Activated B cell treated with CpG ODN at 0.5 μM for 24 hours (primary cell): ENCODE measurements at regions of chr11 and their contacts with region 1.

Region 1: DNA sequence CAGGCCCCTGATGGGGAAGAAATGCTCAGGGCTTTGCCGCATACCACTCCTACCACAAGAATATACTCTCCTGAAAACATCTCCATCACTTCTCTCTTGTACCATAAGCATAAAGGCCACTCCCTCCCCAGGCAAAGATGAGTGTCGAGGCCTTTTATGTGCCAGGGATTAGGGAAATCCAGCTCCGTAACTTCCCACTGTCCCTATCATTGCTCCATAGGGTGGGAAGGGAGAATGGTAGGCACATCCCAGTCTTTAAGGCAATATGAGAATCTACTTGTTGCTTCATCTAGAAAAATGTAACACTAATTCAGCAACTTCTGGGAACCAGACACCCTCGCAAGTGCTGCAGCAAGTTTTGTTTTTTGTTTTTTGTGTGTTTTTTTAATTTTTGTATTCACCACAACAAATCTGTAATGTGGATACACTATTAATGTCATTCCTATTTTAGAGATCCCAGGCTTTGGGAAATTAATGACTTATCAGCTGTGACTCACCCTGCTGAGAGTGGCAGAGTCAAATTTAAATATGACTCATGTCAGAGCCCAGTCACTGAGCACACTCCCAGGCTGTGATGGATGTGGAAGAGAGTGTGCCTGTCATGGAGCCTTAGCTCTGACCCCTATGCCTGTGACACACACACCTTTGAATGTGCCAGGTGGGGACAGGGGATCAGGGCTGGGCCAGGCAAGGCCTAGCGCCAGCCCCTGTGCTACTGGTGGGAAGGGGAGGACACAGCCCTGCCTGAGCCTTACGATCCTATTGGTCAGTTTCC is 23.4 kb downstream of the PANX1 start:
- DNase-seq: no peak
- ATAC-seq: peak; percentile 89
- H3K4me3 Mint-ChIP-seq: no peak overlapping the region
- H3K27ac Mint-ChIP-seq: peak overlapping the region; percentile 57
- H3K4me1 Mint-ChIP-seq: peaks cover 71% of the 10 kb centered on the region
- H3K27me3 Mint-ChIP-seq: no peaks in the 10 kb centered on the region
- CTCF ChIP-seq: no peak

Region 2: GRCh38 chr11:93773045-93773477 is 379.0 kb before region 1 on chr11:
- CTCF ChIA-PET with region 1: no interaction called
- POLR2A ChIA-PET with region 1: no interaction called
- intact Hi-C with region 1: no loop called
- DNase-seq: no peak
- ATAC-seq: no peak
- H3K4me3 Mint-ChIP-seq: no peak overlapping the region
- H3K27ac Mint-ChIP-seq: no peak overlapping the region
- H3K4me1 Mint-ChIP-seq: no peaks in the 10 kb centered on the region
- H3K27me3 Mint-ChIP-seq: no peaks in the 10 kb centered on the region
- CTCF ChIP-seq: no peak

Region 3: DNA sequence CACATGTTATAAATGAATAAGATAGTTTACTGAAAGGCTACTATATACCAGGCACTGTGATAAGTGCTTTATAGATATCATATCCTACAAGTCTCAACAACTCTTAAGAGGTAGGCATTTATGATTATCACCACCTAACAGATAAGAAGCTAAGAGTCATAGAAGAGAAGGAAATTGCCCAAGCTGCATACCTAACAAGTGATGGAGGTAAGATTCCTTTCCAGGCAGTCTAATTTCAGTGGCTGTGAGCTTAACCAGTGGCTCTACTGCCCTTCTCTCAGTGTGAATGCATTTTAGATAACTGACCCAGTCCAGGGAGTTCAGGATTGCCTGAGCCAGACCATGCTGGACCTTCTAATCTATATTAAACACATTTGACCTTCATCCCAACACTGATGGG is 91.7 kb before region 1 on chr11:
- CTCF ChIA-PET with region 1: no interaction called
- POLR2A ChIA-PET with region 1: no interaction called
- intact Hi-C with region 1: no loop called
- DNase-seq: no peak
- ATAC-seq: no peak
- H3K4me3 Mint-ChIP-seq: no peak overlapping the region
- H3K27ac Mint-ChIP-seq: no peak overlapping the region
- H3K4me1 Mint-ChIP-seq: no peaks in the 10 kb centered on the region
- H3K27me3 Mint-ChIP-seq: peaks cover 2% of the 10 kb centered on the region
- CTCF ChIP-seq: no peak

Region 4: DNA sequence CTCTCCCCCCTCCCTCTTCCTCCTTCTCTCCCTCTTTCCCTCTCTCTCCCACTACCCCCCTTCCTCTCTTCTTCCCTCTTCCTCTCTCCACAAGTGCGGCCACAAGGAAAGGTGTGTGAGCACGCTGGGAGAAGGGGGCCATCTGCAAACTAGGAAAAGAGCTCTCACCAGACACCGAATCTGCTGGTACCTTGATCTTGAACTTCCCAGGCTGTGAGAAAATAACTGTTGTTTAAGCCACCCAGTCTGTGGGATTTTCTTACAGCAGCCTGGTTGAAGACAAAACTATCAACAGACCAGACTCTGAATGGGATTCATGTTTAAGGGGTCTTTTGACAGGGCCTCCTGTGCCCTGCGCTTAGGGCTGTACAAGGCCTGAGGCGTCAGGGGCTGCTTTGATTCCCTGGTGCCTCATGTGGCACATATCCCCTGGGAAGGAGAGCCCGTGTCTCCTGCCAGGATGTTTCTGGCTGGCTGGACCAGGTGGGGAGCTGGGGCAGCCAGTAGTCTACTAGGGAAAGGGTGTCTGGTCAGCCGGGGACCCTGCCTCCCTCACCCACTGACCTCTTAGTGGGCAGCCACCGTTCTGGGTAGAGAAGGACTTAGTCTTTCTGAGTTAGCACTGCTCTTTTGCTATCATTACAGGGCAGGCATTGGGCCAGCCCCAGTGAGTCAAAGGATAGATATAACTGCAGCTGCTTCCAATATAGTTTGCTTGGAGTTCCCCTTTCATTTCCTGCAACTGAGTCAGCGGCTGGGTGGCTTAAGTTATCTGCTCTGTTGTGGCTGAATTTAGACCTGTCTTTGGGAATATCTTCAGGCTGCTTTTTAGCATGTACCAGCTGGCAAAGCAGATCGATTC is 17.2 kb before region 1 on chr11:
- CTCF ChIA-PET with region 1: no interaction called
- POLR2A ChIA-PET with region 1: no interaction called
- intact Hi-C with region 1: loop called (anchors 2 kb)
- DNase-seq: no peak
- ATAC-seq: peak; percentile 74
- H3K4me3 Mint-ChIP-seq: peak overlapping the region; percentile 51
- H3K27ac Mint-ChIP-seq: peak overlapping the region; percentile 80
- H3K4me1 Mint-ChIP-seq: peaks cover 49% of the 10 kb centered on the region
- H3K27me3 Mint-ChIP-seq: no peaks in the 10 kb centered on the region
- CTCF ChIP-seq: no peak

Region 5: DNA sequence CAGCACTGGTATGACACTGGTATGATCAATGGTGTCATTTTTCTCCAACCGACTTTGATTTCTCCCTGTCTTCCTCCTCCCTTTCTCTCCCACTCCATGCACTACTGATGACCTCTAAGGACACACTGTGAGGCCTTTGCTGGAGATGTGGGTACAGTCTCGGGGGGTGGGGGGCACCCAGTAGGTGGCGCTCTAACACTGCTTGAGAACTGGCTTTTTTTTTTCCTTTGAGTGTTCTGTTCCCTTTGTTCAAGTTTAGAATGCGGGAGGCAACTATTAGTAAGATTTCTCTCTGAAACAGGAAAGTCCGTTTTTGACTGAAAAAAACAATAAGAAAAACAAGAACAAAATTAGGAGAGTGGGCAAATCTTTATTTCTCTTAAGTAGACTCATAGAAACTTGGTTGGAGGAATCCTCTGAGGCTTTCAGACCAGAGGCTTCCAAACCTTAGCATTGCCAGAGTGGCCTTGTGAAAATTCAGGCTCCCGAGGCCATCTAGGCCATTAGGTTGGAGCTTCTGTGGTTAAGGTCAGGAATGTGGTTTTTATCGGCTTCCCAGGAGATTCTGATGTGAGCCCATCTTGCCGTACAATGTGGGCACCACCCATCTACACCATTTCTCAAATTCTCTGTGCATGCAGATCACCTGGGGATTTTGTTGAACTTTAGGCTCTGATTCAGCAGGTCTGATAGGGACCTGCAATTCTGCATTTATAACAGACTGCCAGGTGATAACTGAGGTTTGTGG is 19.8 kb after region 1 on chr11:
- CTCF ChIA-PET with region 1: no interaction called
- POLR2A ChIA-PET with region 1: no interaction called
- intact Hi-C with region 1: no loop called
- DNase-seq: no peak
- ATAC-seq: no peak
- H3K4me3 Mint-ChIP-seq: no peak overlapping the region
- H3K27ac Mint-ChIP-seq: no peak overlapping the region
- H3K4me1 Mint-ChIP-seq: peaks cover 38% of the 10 kb centered on the region
- H3K27me3 Mint-ChIP-seq: no peaks in the 10 kb centered on the region
- CTCF ChIP-seq: no peak

Region 6: DNA sequence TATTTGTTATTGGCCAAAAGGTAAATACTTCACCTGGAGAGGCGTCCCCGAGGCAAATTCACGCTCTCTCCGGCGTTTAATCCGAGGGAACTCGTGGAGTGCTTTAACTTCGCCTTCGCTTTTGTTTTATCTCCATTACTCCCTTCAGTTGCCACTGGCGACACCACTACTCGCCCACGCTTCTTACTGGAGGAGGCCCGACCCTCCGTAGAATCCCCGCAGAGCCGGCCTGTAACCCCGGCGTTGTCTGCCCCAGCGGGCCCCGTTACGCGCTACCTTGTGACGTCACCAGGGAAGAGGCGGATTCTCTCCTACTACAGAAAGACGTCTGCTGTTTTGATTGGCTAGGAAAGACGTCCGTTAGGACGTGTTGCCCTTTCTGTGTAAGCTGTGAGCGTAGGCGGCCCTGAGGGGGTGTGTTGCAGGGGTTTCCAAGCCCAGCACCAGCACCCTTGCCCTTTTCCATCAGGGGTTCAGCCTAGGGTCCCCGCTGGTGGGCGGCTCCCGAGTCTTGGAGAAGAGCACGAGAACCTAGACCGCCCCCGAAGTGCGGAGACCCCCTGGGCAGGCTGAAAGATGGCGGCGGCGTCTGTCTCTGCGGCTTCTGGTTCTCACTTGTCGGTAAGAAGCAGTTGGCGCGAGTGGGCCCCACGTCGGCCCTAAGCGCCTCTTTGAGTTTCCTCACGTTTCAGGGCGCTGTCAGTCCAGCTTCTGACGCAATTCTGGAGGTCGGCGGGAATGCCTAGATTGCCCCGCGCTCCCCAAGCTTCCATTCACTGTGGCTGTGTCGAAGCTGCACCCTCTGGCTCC is 1638.2 kb after region 1 on chr11 and contains the start of gene CEP57:
- CTCF ChIA-PET with region 1: no interaction called
- POLR2A ChIA-PET with region 1: no interaction called
- intact Hi-C with region 1: no loop called
- DNase-seq: peak; percentile 84
- ATAC-seq: peak; percentile 64
- H3K4me3 Mint-ChIP-seq: peak within 1 kb of the TSS; percentile 100
- H3K27ac Mint-ChIP-seq: peak within 1 kb of the TSS; percentile 100
- H3K4me1 Mint-ChIP-seq: peaks cover 47% of the 10 kb centered on the region
- H3K27me3 Mint-ChIP-seq: no peaks in the 10 kb centered on the region
- CTCF ChIP-seq: no peak
- total RNA-seq, gene CEP57: 52.6 and 53.7 TPM in 2 replicates